K562 (cell line): ENCODE measurements at regions of chr20 and their contacts with region 1.

Region 1: GRCh38 chr20:45322952-45323383 is 14.9 kb upstream of the MATN4 start:
- DNase-seq: peak in 3 of 4 experiments; percentile 41 to 84 (median 73)
- ATAC-seq: peak; percentile 92
- H3K4me3 ChIP-seq: no peak overlapping the region
- H3K27ac ChIP-seq: no peak overlapping the region
- H3K4me1 ChIP-seq: peaks cover 4 to 9% of the 10 kb centered on the region in 2 experiments; a peak in 4 of 5 replicates
- H3K27me3 ChIP-seq: no peaks in the 10 kb centered on the region
- CTCF ChIP-seq: peak; percentile 78 to 94 (median 81)
- EP300 ChIP-seq: no peak
- POLR2A ChIP-seq: no peak
- RAD21 ChIP-seq: peak; percentile 95 to 97

Region 2: DNA sequence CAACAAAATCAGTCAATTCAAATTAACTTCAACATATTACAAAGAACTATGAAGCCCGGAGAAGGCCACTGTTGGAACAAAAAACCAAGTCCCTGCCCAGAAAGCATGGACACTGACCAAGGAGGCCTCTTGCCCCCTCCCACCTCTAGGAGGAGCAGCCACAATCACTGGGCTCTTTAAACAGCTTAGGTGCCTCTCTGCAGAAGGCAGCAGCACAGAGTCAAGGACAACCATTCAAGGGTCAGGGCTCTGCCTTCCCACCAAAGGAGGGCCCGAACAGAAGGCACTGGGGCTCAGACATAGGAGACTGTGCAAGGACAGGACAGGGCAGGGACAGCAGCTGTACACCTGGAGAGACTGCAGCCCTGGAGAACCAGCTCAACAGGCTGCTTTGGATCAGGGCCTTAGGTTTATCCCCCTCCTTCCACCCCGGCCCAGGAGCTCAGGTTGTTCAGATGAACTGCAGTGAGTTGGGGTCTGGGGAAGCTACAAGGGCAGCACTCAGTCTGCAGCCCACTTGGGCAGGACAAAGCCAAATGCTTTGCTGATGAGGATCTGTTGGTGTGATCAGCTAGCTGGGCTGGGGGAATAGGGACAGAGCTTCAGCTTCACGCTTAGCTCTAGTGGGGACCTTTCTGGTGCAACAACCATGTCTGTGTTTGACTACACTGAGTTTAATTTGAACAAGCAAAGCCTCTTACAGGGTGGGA is 380.5 kb before region 1 on chr20:
- CTCF ChIA-PET with region 1: no interaction called
- POLR2A ChIA-PET with region 1: no interaction called
- in situ Hi-C with region 1: no loop called
- intact Hi-C with region 1: no loop called
- DNase-seq: peak in 1 of 4 experiments; percentile 20
- ATAC-seq: peak; percentile 87
- H3K4me3 ChIP-seq: no peak overlapping the region
- H3K27ac ChIP-seq: no peak overlapping the region
- H3K4me1 ChIP-seq: no peaks in the 10 kb centered on the region
- H3K27me3 ChIP-seq: no peaks in the 10 kb centered on the region
- CTCF ChIP-seq: peak in 2 of 3 experiments; percentile 28; a peak in 2 of 6 replicates
- EP300 ChIP-seq: no peak
- POLR2A ChIP-seq: peak; percentile 6
- RAD21 ChIP-seq: no peak

Region 3: GRCh38 chr20:45283548-45284057 is 39.4 kb before region 1 on chr20:
- CTCF ChIA-PET with region 1: no interaction called
- POLR2A ChIA-PET with region 1: no interaction called
- in situ Hi-C with region 1: no loop called
- intact Hi-C with region 1: no loop called
- DNase-seq: no peak
- ATAC-seq: 0 out of 3 replicates have a peak, but pooled peaks have one; percentile 32
- H3K4me3 ChIP-seq: no peak overlapping the region
- H3K27ac ChIP-seq: no peak overlapping the region
- H3K4me1 ChIP-seq: no peaks in the 10 kb centered on the region
- H3K27me3 ChIP-seq: peaks cover 9 to 42% of the 10 kb centered on the region in 2 experiments; a peak in 4 of 5 replicates
- CTCF ChIP-seq: no peak
- EP300 ChIP-seq: no peak
- POLR2A ChIP-seq: no peak
- RAD21 ChIP-seq: no peak

Region 4: GRCh38 chr20:45368221-45368980 is 45.4 kb after region 1 on chr20:
- CTCF ChIA-PET with region 1: interaction called, 11 read pairs
- POLR2A ChIA-PET with region 1: interaction called, 3 read pairs
- in situ Hi-C with region 1: loop called (anchors 5 kb)
- intact Hi-C with region 1: loop called (anchors 1 kb)
- DNase-seq: no peak
- ATAC-seq: no peak
- H3K4me3 ChIP-seq: no peak overlapping the region
- H3K27ac ChIP-seq: no peak overlapping the region
- H3K4me1 ChIP-seq: peaks cover 16 to 17% of the 10 kb centered on the region in 2 experiments; a peak in 4 of 5 replicates
- H3K27me3 ChIP-seq: no peaks in the 10 kb centered on the region
- CTCF ChIP-seq: no peak
- EP300 ChIP-seq: no peak
- POLR2A ChIP-seq: no peak
- RAD21 ChIP-seq: no peak

Region 5: DNA sequence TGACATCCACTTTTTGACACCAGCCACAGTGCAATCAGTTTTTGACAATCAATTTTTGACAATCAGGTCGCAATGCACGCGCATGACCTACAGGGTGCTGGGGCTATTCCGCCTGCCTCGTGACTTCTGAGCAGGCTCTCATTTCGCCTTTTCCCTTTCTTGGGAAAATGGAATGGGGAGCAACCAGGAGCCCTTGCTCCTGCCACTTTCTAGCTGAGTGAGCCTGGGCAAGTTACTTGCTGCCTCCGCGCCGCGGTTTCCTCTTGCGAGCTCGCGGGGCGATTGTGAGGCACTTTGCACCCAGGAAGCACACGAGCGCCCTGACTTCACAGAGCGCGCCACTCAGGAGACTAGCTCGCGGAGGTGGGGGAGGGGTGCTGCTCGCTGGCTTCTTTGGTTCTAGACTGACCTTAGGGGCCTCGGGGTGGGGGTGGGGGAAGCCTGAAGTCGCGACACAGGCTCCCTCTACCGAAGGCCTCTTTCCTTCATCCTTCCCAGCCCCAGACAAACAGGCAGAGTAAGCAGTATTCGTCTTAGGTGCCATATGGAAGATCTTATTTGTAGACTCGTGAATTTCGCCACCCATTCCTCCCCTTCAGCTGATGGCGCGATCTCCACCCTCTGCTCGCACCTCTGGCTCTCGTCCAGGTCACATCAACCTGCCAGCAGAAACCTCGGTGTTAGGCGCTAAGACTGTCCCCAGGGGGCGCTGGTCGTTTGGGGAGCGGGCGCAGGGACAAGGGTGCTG is 50.6 kb after region 1 on chr20:
- CTCF ChIA-PET with region 1: interaction called, 11 read pairs
- POLR2A ChIA-PET with region 1: no interaction called
- in situ Hi-C with region 1: loop called (anchors 5 kb)
- intact Hi-C with region 1: loop called (anchors 1 kb)
- DNase-seq: peak; percentile 84 to 95 (median 88)
- ATAC-seq: peak; percentile 96
- H3K4me3 ChIP-seq: peak overlapping the region; percentile 41
- H3K27ac ChIP-seq: peak overlapping the region; percentile 74
- H3K4me1 ChIP-seq: peaks cover 7 to 15% of the 10 kb centered on the region in 2 experiments; a peak in 4 of 5 replicates
- H3K27me3 ChIP-seq: no peaks in the 10 kb centered on the region
- CTCF ChIP-seq: peak; percentile 95 to 97 (median 95)
- EP300 ChIP-seq: no peak; the same call in 1 of the 2 replicates
- POLR2A ChIP-seq: peak; percentile 64
- RAD21 ChIP-seq: peak; percentile 87 to 92

Region 6: GRCh38 chr20:45436732-45437391 is 113.9 kb after region 1 on chr20:
- CTCF ChIA-PET with region 1: interaction called, 33 read pairs
- POLR2A ChIA-PET with region 1: interaction called, 5 read pairs
- in situ Hi-C with region 1: loop called (anchors 5 kb)
- intact Hi-C with region 1: loop called (anchors 1 kb)
- DNase-seq: peak; percentile 87 to 88 (median 88)
- ATAC-seq: peak; percentile 100
- H3K4me3 ChIP-seq: peak overlapping the region; percentile 38
- H3K27ac ChIP-seq: no peak overlapping the region
- H3K4me1 ChIP-seq: peaks cover 3 to 6% of the 10 kb centered on the region in 2 experiments; a peak in 2 of 5 replicates
- H3K27me3 ChIP-seq: no peaks in the 10 kb centered on the region
- CTCF ChIP-seq: peak; percentile 94 to 96 (median 95)
- EP300 ChIP-seq: 0 out of 2 replicates have a peak, but pooled peaks have one; percentile 14
- POLR2A ChIP-seq: no peak
- RAD21 ChIP-seq: peak; percentile 92 to 97

Region 7: DNA sequence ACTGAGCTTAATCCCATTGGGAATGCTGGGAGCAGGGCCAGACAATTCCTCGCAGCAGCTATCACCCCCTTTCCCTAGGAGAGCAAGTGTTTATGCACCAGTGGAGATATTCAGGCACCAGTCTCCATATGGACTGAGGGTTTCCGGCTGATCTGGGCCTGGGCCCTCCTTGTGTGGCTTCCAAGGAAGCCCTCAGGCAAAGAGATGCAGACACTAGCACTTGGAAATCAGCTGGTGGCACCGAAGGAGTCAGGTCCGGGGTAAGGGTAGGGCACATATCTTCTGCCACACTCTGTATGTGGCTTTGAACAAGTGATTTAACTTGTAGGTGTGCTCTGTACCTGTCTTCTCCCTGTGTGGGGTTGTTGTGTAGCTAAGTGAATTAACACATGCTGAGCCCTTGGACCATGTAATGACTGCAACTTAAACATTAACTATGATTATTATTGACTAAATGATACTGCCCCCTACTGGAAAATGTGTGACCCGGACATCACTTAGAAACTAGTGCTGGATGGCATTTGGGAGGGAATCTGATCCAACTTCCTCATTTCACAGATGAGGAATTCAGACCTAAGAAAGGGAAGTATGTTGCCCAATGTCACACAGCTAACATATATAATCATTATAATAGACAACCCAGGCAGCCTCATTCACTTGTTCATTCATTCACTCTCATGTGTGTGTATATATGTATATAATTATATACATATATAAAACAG is 127.3 kb after region 1 on chr20:
- CTCF ChIA-PET with region 1: interaction called, 8 read pairs
- POLR2A ChIA-PET with region 1: interaction called, 4 read pairs
- in situ Hi-C with region 1: no loop called
- intact Hi-C with region 1: loop called (anchors 1 kb)
- DNase-seq: peak; percentile 36 to 70 (median 48)
- ATAC-seq: peak; percentile 81
- H3K4me3 ChIP-seq: no peak overlapping the region
- H3K27ac ChIP-seq: no peak overlapping the region
- H3K4me1 ChIP-seq: no peaks in the 10 kb centered on the region
- H3K27me3 ChIP-seq: peaks cover 8 to 26% of the 10 kb centered on the region in 2 experiments; a peak in 4 of 5 replicates
- CTCF ChIP-seq: peak; percentile 63 to 81 (median 77)
- EP300 ChIP-seq: no peak
- POLR2A ChIP-seq: no peak
- RAD21 ChIP-seq: peak; percentile 37 to 58